ENCODE measurements at regions of chr22 and their contacts with region 1.

Region 1: DNA sequence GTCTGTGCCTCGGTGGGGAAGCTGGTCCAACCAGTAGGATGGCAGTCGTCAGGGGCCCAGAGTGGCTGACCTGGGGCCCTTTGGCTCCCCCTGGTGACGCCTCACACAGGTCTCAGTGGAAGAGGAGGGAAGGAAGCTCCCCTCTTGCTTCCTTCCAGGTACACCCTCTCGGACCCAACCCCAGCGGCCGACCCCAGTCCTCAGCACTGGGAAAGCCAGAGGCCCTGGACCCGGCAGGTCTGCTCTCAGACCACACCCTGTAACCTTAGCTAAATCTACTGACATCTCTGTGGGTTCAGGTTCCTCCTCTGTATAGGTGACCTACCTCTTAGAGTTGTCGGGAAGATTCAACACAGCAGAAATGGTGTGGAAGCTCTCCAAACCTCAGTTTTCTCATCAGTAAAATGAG is 3.4 kb upstream of the SCUBE1 start:
- DNase-seq: peak; percentile 56
- H3K4me3 Mint-ChIP-seq: no peak overlapping the region
- H3K27ac Mint-ChIP-seq: no peak overlapping the region
- H3K4me1 Mint-ChIP-seq: peaks cover 22% of the 10 kb centered on the region
- H3K27me3 Mint-ChIP-seq: peaks cover 24% of the 10 kb centered on the region

Region 2: GRCh38 chr22:43230971-43231723 is 115.4 kb before region 1 on chr22:
- intact Hi-C with region 1: loop called (anchors 1 kb)
- DNase-seq: peak; percentile 54
- H3K4me3 Mint-ChIP-seq: no peak overlapping the region
- H3K27ac Mint-ChIP-seq: no peak overlapping the region
- H3K4me1 Mint-ChIP-seq: peaks cover 5% of the 10 kb centered on the region
- H3K27me3 Mint-ChIP-seq: peaks cover 1% of the 10 kb centered on the region

Region 3: DNA sequence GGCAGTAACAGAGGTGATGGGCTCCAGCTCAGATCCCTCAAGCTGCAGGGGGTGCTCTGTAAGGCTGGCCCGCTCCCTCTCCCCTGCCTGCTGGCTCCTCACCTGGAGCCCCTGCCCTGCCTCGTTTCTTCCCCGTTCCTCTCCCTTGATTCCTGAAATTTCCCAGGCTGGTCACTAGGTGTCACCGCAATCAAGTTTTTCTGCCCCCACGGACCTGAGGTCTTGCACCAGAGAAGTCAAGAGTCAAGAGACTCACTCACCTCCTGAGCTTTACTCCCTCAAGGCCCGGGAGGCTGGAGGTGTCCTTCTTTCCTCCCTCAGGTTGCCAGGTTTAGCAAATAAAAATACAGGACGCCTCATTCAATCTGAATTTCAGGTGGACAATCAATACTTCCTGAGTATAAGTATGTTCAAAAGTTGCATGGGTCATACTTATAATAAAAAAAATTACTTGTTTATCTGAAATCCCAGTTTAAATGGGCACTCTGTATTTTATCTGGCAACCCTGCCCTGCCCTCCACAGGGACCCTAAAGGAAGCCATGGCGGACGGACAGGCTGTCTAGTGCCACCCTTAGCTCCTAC is 72.5 kb before region 1 on chr22:
- intact Hi-C with region 1: loop called (anchors 1 kb)
- DNase-seq: peak; percentile 29
- H3K4me3 Mint-ChIP-seq: no peak overlapping the region
- H3K27ac Mint-ChIP-seq: no peak overlapping the region
- H3K4me1 Mint-ChIP-seq: peaks cover 7% of the 10 kb centered on the region
- H3K27me3 Mint-ChIP-seq: peaks cover 2% of the 10 kb centered on the region